ENCODE measurements at regions of chr5 and their contacts with region 1.

Region 1: DNA sequence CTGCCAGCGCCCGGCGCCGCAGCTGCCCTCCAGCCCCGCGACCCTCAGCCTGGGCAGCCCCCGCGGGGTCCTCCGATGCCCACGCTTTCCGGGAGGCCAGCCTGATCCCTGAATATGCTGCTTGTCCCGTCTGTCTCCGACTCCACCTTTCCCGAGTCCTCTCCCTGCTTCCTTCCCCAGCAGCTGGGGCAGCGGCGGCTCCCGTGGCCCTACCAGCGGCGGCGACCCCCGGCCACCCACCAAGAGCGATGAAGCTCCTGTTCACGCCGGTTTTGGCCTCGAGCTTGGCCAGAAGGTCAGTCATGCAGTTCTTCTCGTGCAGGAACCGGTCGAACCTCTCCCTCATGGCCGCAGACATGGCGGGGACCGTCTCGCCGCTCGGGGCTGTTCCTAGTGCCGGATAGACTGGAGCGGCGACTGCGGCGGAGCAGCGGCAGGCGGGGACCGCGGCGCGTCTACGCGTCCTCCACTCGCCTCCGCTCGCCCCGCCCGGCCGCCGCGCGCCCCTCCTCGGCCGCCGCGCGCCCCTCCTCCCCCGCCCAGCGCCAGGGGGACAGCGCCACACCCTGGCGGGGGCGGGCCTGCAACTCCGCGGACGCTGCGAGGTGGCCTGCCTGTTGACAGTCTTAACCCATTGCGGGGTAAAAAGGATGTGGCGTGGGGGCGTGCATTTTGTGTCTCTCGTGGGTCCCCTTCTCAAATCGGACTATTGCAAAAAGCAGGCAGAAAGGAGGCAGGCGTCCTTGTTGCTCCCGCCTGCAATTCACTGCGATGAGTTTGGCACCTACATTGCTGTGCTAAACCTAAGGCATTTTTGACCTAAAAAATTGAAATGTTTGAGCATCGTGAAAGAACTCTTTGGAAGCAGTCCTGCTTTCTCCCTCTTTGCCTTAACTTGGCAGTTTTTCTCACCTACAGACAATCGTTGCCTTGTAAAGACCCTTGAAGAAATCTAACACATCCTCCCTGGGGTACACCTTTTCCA is at the start of gene REEP5:
- DNase-seq: peak; percentile 79 to 89
- H3K4me3 ChIP-seq: peak within 1 kb of the TSS; percentile 75 to 93
- H3K27ac ChIP-seq: peak within 1 kb of the TSS; percentile 92 to 98
- H3K4me1 ChIP-seq: peaks cover 0 to 52% (median 42%) of the 10 kb centered on the region in 4 donors
- H3K27me3 ChIP-seq: no peaks in the 10 kb centered on the region
- CTCF ChIP-seq: peak; percentile 68 to 83

Region 2: DNA sequence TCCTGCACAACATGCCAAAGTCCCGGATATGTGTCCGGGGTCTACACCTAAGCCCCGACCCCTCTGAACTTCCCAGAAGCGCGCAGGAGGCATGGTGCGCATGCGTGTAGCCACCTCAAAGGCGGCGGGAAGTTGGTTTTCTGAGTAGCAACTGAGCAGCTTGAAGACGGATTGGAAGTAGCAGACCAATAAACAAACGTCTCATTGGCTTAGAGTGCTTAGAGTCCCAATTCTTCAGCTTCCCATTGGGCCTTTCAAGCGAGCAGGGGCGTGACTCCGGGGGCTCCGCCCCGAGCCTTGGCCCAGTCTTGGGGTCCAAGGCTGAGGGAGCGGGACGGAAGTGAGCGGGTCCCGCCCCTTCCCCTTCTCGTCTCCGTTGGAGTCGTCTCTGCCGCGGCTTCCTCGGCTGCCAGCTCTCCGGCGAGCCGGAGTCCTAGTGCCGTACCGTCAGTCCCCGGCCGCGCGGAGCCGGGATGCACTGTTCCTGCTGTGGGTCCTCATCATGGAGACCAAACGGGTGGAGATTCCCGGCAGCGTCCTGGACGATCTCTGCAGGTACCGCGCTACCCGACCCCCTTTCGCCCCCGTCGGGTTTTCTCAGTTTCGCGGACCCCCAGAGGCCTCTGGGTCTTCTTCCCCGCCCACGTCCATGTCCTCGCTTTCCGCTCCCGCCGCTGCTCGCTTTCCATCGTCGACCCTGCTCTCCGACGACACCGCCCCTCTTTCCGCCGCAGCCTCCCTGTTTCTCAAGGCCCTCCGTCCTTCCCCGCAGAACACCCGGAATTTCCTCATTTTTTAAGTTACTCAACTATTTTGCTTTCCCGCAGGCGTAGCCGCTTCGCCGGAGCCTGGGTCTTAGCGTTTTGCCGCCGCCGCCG is 54.5 kb after region 1 on chr5 and contains the start of gene DCP2:
- intact Hi-C with region 1: loop called (anchors 5 kb)
- DNase-seq: peak; percentile 96 to 98
- H3K4me3 ChIP-seq: peak within 1 kb of the TSS; percentile 75 to 78
- H3K27ac ChIP-seq: peak within 1 kb of the TSS; percentile 86 to 93
- H3K4me1 ChIP-seq: peaks cover 0 to 32% (median 10%) of the 10 kb centered on the region in 4 donors
- H3K27me3 ChIP-seq: no peaks in the 10 kb centered on the region
- CTCF ChIP-seq: no peak